Activated CD8-positive, alpha-beta T cell treated with anti-CD3 and anti-CD28 coated beads, Interleukin-2, amount 10 ng/mL, durations not matched to agents 7 days and 5 days (primary cell): ENCODE measurements at regions of chr4 and their contacts with region 1.

Region 1: DNA sequence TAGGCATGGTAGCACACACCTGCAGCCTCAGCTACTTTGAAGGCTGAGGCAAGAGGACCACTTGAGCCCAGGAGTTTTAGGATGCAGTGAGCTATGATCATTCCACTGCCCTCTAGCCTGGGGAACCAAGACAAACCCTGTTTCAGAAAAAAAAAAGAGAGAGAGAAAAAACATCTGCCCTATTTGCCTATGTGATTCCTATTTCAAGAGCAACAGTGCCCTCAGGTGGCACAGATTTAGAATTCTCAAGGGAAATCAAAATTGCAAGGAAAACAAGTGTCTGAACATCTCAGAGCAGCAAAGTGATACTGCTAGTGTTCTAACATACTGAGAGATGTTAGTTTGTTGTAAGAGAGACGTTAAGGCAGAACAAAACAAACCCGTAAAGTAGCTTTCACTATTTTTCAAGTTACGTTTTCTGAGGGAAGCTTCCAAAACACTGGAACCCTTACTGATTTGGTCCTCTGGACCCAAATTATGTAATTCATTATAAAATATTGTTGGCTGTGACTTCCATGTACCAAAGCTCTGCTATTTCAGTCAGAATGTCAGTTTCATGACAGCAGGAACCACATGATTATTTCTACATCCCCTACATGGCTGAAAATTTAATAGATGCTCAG is 7.9 kb downstream of the BDH2 start:
- DNase-seq: peak; percentile 75
- ATAC-seq: peak; percentile 77
- H3K4me3 Mint-ChIP-seq: peak overlapping the region; percentile 67
- H3K27ac Mint-ChIP-seq: peak overlapping the region; percentile 77
- H3K4me1 Mint-ChIP-seq: peaks cover 26% of the 10 kb centered on the region
- H3K27me3 Mint-ChIP-seq: no peaks in the 10 kb centered on the region

Region 2: GRCh38 chr4:102620697-102621497 is 470.8 kb before region 1 on chr4:
- CTCF ChIA-PET with region 1: interaction called, 10 read pairs
- POLR2A ChIA-PET with region 1: no interaction called
- DNase-seq: no peak
- ATAC-seq: peak; percentile 20
- H3K4me3 Mint-ChIP-seq: no peak overlapping the region
- H3K27ac Mint-ChIP-seq: peak overlapping the region; percentile 44
- H3K4me1 Mint-ChIP-seq: peaks cover 68% of the 10 kb centered on the region
- H3K27me3 Mint-ChIP-seq: no peaks in the 10 kb centered on the region

Region 3: DNA sequence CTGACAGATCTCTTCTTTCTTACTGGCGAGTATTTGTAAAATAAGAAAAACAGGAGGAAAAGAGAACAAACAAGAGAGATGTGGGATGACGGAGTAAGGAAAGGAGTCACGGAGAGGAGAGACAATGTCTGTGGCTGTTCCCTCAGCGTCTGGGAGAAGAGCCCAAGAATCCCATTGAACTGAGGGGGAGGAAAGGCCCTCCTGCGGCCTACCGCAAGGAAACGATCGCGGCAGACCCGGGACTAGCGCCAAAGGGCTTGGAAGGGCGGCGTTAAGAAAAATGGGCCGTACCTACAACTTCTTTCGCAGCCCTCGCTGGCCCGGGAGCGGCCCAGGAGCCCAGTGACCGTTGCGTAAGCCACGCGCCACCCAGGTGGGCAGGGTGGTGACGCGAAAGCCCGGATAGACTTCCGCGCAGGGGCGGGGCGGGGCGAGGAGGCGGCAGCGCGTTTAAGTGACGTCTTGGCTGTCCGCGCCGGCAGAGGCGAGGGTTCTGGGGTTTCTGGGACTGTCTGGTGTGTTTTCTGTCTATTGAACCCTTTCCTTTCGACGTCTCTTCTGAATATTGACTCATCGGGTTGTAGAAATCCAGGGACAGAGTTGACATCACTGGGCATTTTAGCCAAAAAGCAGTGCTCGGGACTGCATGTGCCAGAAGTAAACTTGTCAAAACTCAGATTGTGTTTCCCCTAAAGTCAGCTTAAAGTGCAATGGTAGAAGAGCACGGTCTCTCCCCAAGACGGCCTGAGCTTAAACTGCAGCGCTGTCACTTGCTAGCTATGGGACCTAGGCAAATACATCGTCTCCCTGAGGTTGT is 72.2 kb before region 1 on chr4 and contains the start of gene SLC9B1:
- CTCF ChIA-PET with region 1: interaction called, 28 read pairs
- POLR2A ChIA-PET with region 1: no interaction called
- DNase-seq: peak; percentile 96
- ATAC-seq: peak; percentile 99
- H3K4me3 Mint-ChIP-seq: peak within 1 kb of the TSS; percentile 84
- H3K27ac Mint-ChIP-seq: peak within 1 kb of the TSS; percentile 96
- H3K4me1 Mint-ChIP-seq: peaks cover 19% of the 10 kb centered on the region
- H3K27me3 Mint-ChIP-seq: no peaks in the 10 kb centered on the region
- total RNA-seq, gene SLC9B1: 0.83 to 1.3 TPM

Region 4: DNA sequence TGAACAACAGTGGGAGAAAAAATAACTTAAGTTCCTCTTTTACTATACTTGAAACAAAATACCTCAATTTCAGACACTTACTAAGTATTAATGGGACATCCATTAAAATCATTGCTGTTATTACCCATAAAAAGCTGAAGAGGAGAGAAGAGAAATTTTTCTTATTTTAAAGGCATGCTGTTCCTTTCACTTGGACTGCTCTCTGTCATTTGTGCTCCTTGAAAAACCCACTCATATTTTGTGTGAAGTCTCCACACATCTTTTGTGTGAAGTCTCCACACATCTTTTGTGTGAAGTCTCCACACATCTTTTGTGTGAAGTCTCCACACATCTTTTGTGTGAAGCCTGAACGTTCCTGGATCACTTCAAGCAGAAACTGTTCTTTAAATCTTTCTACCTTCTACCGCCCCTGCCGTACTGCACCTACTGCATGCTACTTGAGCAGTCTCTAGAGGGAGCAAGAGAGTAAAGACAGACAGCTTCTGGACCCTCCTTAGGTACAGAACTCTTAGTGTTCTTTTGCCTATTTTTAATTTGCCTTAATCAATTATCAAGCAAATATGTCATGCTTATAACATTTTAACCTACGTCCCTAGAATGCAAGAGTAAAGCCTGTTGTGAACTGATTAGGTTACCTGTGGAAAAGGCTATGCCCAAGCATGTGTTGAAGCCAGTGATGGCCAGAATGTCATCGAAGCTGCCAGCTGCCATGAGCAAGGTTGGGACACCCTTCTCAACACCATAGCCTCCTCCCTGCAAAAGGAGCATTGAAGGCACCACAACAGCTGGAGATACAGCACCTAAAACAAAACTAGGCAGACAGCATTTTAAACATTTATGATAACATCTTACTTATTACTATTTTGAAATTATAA is 45.1 kb before region 1 on chr4:
- CTCF ChIA-PET with region 1: interaction called, 67 read pairs
- POLR2A ChIA-PET with region 1: no interaction called
- DNase-seq: peak; percentile 47
- ATAC-seq: peak; percentile 95
- H3K4me3 Mint-ChIP-seq: no peak overlapping the region
- H3K27ac Mint-ChIP-seq: no peak overlapping the region
- H3K4me1 Mint-ChIP-seq: peaks cover 2% of the 10 kb centered on the region
- H3K27me3 Mint-ChIP-seq: no peaks in the 10 kb centered on the region